Activated CD8-positive, alpha-beta memory T cell treated with anti-CD3 and anti-CD28 coated beads, Interleukin-2, amount 10 ng/mL, durations not matched to agents 7 days and 5 days (primary cell): ENCODE measurements at regions of chr12 and their contacts with region 1.

Region 1: GRCh38 chr12:50074936-50075807 is 10.0 kb upstream of the SMARCD1 start:
- DNase-seq: peak; percentile 86
- ATAC-seq: peak; percentile 95
- H3K4me3 Mint-ChIP-seq: no peak overlapping the region
- H3K27ac Mint-ChIP-seq: peak overlapping the region; percentile 42
- H3K4me1 Mint-ChIP-seq: peaks cover 10% of the 10 kb centered on the region
- H3K27me3 Mint-ChIP-seq: no peaks in the 10 kb centered on the region

Region 2: DNA sequence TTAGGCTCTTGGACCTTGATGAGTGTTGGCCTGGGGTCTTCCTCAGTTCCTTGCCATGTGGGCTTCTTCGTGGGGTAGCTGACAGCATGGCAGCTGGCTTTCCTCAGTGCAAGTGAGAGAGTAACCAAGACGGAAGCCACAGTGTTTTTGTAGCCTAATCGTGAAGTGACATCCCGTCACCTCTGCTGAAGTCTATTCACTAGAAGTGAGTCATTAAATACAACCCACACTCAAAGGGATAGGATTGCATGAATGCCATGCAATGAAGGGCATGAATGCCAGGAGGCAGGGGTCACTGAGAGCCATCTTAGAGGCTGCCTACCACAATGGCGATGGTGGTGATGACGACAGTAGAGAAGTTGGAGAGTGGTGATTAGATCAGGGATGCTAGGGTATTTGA is 31.3 kb before region 1 on chr12:
- CTCF ChIA-PET with region 1: interaction called, 221 read pairs
- DNase-seq: no peak
- ATAC-seq: no peak
- H3K4me3 Mint-ChIP-seq: no peak overlapping the region
- H3K27ac Mint-ChIP-seq: no peak overlapping the region
- H3K4me1 Mint-ChIP-seq: peaks cover 15% of the 10 kb centered on the region
- H3K27me3 Mint-ChIP-seq: peaks cover 6% of the 10 kb centered on the region